ENCODE measurements at regions of chr14 and their contacts with region 1.

Region 1: GRCh38 chr14:76227448-76228050 is 75.8 kb downstream of the GPATCH2L start:
- DNase-seq: peak in 1 of 2 experiments; percentile 56
- H3K4me3 ChIP-seq: no peak overlapping the region
- H3K27ac ChIP-seq: no peak overlapping the region
- H3K4me1 ChIP-seq: no peaks in the 10 kb centered on the region
- H3K27me3 ChIP-seq: no peaks in the 10 kb centered on the region
- CTCF ChIP-seq: no peak

Region 2: GRCh38 chr14:75960231-75960630 is 267.3 kb before region 1 on chr14:
- CTCF ChIA-PET with region 1: no interaction called
- POLR2A ChIA-PET with region 1: no interaction called
- intact Hi-C with region 1: no loop called
- DNase-seq: no peak
- H3K4me3 ChIP-seq: no peak overlapping the region
- H3K27ac ChIP-seq: no peak overlapping the region
- H3K4me1 ChIP-seq: no peaks in the 10 kb centered on the region
- H3K27me3 ChIP-seq: no peaks in the 10 kb centered on the region
- CTCF ChIP-seq: no peak

Region 3: GRCh38 chr14:76080025-76080424 is 147.5 kb before region 1 on chr14:
- CTCF ChIA-PET with region 1: no interaction called
- POLR2A ChIA-PET with region 1: no interaction called
- intact Hi-C with region 1: no loop called
- DNase-seq: no peak
- H3K4me3 ChIP-seq: no peak overlapping the region
- H3K27ac ChIP-seq: no peak overlapping the region
- H3K4me1 ChIP-seq: no peaks in the 10 kb centered on the region
- H3K27me3 ChIP-seq: no peaks in the 10 kb centered on the region
- CTCF ChIP-seq: no peak

Region 4: DNA sequence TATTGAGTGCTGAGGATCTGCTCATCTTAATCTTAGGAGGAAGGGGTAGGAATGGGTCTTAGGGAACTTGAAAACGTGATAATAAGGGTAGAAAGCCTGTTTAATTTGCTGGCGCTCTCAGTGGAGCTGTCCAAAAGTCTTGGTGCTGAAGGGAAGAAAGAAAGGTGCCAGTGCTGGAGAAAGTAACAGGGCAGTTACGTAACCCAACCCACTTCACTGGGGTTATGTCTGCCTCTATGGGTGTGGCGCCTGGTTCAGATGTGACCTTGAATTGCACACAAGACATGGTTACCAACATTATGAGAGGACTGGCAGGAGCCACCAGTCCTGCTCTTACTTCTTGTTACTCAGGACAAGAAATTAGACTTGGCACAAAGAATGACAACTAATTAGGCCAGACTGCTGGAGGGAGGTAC is 94.5 kb before region 1 on chr14:
- CTCF ChIA-PET with region 1: no interaction called
- POLR2A ChIA-PET with region 1: interaction called, 10 read pairs
- intact Hi-C with region 1: no loop called
- DNase-seq: peak in 1 of 2 experiments; percentile 30
- H3K4me3 ChIP-seq: no peak overlapping the region
- H3K27ac ChIP-seq: no peak overlapping the region
- H3K4me1 ChIP-seq: no peaks in the 10 kb centered on the region
- H3K27me3 ChIP-seq: peaks cover 97% of the 10 kb centered on the region
- CTCF ChIP-seq: no peak

Measured in PC-9 (cell line).